ENCODE measurements at regions of chr6 and their contacts with region 1.

Region 1: GRCh38 chr6:46090115-46091079 is 39.4 kb upstream of the ENPP4 start:
- DNase-seq: peak; percentile 64 to 70
- H3K4me3 ChIP-seq: no peak overlapping the region
- H3K27ac ChIP-seq: no peak overlapping the region
- H3K4me1 ChIP-seq: no peaks in the 10 kb centered on the region
- H3K27me3 ChIP-seq: no peaks in the 10 kb centered on the region
- CTCF ChIP-seq: peak; percentile 56 to 89 (median 69)
- POLR2A ChIP-seq: no peak

Region 2: DNA sequence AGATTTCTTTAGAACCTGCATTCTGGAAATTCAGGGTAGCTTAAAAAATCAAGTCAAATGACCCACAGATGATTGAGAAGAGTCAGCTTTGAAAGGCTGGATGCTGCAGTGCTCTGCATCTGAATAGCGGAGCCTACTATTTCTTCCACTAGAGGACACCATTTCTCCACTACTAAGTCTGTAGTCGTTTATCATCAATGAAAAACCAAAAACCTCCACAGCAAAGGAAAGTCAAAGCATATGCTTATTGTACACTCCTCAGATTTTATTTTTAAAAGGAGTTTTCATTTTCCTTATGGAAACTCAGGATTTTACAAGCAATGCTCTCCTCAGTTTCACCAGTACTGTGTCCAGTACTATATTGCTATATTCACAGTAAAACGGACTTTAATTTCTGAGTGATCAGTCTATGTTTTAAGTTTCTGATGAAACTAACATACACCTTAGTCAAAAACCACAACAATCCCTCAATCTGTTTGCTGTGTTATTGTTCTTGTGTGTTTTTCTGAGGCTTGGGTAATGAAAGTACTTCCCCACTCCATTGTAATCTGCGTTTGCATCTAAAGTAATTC is 130.9 kb after region 1 on chr6:
- intact Hi-C with region 1: loop called (anchors 10 kb)
- DNase-seq: peak in 1 of 2 donors; percentile 2
- H3K4me3 ChIP-seq: no peak overlapping the region
- H3K27ac ChIP-seq: no peak overlapping the region
- H3K4me1 ChIP-seq: peaks cover 7 to 8% of the 10 kb centered on the region in 2 donors
- H3K27me3 ChIP-seq: no peaks in the 10 kb centered on the region
- CTCF ChIP-seq: peak; percentile 51 to 95 (median 77)
- POLR2A ChIP-seq: no peak

Region 3: DNA sequence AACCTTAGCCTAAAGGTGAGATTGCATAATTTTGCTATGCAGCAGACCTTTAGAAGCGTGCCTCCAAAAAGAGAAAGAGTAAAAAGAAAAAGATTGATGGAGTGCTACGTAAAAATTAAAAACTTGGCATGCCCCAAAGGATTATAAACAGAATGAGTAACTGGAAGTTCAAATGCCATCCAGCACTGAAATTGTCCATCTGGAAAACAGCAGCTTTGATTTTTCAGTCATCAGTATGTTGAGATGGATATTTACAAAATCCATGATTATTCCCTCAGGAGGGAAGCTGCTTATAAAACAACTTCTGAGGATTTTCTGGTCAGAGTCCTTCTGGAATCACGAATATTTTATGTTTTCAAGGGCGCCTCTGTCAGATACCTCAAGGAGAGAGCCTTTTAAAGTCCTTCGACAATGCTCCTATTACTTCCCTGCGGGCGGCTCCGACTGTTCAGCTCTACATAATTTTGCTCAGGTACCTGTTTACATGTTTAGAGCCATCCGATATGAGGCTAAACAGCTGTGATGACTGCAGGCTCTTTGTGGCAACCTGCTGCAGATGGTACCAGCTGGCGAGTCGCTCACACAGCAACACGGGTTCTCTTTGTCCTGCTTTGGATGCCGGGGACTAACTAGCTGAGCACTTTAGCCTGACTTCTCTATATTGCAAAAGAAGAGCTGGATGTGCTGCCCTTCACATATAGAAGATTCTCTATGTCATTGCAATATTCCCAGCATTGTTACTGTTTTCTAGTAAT is 317.6 kb after region 1 on chr6:
- intact Hi-C with region 1: loop called (anchors 5 kb)
- DNase-seq: no peak
- H3K4me3 ChIP-seq: no peak overlapping the region
- H3K27ac ChIP-seq: no peak overlapping the region
- H3K4me1 ChIP-seq: no peaks in the 10 kb centered on the region
- H3K27me3 ChIP-seq: no peaks in the 10 kb centered on the region
- CTCF ChIP-seq: no peak
- POLR2A ChIP-seq: no peak

Region 4: GRCh38 chr6:46584586-46584985 is 494.2 kb after region 1 on chr6:
- intact Hi-C with region 1: no loop called
- DNase-seq: no peak
- H3K4me3 ChIP-seq: no peak overlapping the region
- H3K27ac ChIP-seq: no peak overlapping the region
- H3K4me1 ChIP-seq: peaks cover 8 to 21% of the 10 kb centered on the region in 2 donors
- H3K27me3 ChIP-seq: no peaks in the 10 kb centered on the region
- CTCF ChIP-seq: no peak
- POLR2A ChIP-seq: no peak

Region 5: DNA sequence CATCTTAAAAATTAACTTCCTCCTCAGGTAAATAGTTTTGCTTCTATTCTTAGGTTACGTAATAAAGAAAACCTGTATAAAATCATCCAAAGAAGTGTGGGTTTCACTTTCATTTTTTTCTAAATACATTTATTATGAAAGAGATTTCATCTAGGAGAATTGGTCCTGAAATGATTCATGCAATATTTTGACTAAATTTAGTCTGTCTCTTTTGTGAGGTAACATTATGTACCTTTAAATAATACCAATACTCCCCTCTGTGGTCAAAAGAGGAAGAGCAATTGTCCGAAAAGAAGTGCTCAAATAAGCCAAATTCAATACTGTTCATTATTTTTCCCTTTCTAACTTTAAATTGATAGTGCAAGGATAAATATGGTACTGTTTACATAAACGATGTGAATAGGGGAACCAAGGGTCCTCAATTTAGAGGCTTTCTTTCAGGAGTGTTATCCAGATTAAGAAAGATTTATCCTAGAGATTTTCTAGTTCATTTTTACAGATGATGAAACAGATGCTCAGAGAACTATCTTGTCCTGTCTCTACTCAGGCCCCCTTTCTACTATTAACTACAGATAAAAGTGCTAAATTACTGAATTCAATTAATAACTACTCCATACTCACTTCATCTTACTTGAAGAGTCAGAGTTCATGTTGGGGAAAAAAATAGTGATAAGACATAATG is 536.0 kb after region 1 on chr6:
- intact Hi-C with region 1: loop called (anchors 10 kb)
- DNase-seq: no peak
- H3K4me3 ChIP-seq: no peak overlapping the region
- H3K27ac ChIP-seq: no peak overlapping the region
- H3K4me1 ChIP-seq: no peaks in the 10 kb centered on the region
- H3K27me3 ChIP-seq: no peaks in the 10 kb centered on the region
- CTCF ChIP-seq: peak; percentile 40 to 85 (median 60)
- POLR2A ChIP-seq: no peak

Measured in thyroid gland (tissue), 4 donors.